Motor neuron (in vitro differentiated cells): ENCODE measurements at regions of chr19 and their contacts with region 1.

Region 1: DNA sequence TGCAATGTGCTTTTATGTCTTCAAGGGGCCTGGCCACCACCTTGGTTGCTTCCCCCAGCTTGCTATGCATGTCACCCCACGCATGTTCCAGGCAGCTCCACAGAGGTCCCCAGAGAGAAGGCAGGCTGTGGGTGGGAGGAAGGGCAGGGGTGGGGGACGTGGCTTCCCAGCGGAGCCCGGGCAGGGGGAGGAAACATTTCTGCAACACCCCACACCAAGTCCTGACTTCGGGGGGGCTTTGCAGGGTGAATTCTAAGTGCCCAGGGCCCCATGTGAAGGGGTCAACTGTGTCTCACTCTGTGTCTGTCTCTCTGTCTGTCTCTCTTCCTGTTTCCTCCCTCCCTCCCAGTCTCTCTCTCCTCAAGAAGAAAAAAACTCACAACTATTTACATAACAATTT is 39.6 kb downstream of the LTBP4 start:
- ATAC-seq: peak in 4 of 8 experiments; percentile 32 to 61 (median 36)
- H3K4me3 ChIP-seq: no peak overlapping the region
- H3K27ac ChIP-seq: no peak overlapping the region
- H3K4me1 ChIP-seq: peaks cover 7 to 15% of the 10 kb centered on the region in 2 donors

Region 2: DNA sequence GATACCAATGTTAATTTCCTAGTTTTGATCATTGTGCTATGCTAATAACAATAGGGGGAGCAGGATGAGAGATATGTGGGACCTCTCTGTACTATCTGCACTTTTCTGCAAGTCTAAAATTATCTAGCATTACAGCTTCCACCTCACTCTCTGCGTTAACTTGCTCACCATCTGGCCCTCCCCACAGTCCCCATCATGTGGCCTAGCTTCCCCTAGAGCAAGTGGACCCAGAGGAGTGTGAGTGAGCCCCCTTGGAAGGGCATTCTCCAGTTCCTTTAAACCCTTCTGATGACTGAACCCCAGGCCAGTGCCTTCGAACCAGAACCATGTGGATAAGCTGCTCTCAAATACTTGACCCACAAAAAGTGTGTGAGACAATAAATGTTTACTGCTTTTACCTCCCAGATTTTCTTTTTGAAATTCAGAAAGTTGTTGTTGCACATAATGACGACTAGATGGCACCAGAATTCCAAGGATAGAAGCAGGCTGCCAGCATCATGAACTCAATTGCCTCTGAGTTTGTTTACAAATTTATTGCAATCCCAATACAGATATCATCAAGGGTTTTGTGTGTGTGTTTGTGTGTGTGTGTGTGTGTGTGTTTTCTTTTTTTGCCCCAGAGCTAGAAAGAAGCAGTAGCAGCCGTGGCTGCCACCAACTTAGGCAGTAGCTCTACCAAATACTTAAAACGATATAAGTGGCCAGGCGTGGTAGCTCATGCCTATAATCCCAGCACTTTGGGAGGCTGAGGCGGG is 501.0 kb before region 1 on chr19:
- in situ Hi-C with region 1: loop called in 1 of 9 experiments (anchors 25 kb)
- ATAC-seq: peak; percentile 32 to 52 (median 44)
- H3K4me3 ChIP-seq: no peak overlapping the region
- H3K27ac ChIP-seq: no peak overlapping the region
- H3K4me1 ChIP-seq: peaks cover 0 to 4% of the 10 kb centered on the region in 2 donors

Region 3: DNA sequence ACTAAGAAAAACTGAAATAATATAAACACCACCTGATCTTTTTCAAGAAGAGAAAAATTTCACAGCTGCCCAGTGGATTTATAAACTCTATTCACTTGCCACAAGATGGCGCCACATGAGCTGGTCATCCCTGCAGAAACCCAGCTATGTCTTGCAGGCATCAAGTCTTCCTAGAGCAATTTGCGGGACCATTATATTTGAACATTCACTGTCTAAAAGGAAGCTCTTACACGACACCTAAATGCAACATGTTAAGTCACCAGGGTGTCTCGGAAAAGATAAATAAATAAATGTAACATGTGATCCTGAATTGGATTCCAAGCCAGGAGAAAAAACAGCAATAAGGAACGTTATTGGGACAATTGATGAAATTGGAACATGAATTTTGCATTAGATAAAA is 335.3 kb before region 1 on chr19:
- in situ Hi-C with region 1: loop called in 1 of 9 experiments (anchors 25 kb)
- ATAC-seq: peak; percentile 70 to 90 (median 84)
- H3K4me3 ChIP-seq: no peak overlapping the region
- H3K27ac ChIP-seq: no peak overlapping the region
- H3K4me1 ChIP-seq: peaks cover 0 to 8% of the 10 kb centered on the region in 2 donors

Region 4: DNA sequence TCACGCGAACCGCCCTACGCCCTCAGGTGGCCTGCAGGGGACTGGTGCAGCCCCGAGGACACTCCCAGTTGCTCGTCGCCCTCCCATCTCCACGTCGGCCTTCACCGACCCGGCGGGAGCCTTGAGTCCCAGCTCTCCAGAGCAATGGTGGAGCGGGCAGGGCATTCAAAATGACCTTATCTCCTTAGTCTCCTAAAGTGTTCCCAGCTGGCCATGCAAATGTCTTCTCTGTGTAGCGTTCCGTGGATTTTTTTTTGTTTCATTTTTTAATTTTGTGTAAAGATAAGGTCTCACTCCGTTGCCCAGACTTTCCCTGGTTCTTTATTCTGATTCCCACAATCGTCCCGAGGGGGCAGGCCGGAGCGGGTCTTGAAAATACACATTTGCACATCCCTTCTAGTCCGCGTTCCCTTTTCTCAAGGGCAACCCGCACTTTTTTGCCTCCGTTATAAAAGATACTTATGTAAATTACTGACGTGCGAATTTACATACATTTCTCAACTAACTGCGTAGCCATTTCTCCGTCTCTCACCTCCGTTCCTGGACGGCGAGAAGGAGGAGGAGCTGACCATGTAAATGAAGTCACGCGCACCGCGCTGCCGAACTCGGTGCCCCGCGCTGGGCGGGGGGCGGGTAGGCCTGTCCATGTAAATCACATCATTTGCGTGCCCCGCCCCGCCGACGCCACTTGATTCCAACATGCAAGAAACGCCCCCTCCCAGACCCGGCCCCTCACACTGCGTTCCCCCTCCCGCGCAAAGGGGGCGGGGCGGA is 157.7 kb after region 1 on chr19:
- in situ Hi-C with region 1: no loop called
- ATAC-seq: peak; percentile 78 to 87 (median 80)
- H3K4me3 ChIP-seq: peak overlapping the region; percentile 64 to 97 (median 72)
- H3K27ac ChIP-seq: peak overlapping the region; percentile 72 to 81
- H3K4me1 ChIP-seq: peaks cover 33 to 34% of the 10 kb centered on the region in 2 donors